RWPE1 (cell line): ENCODE measurements at regions of chr4 and their contacts with region 1.

Region 1: GRCh38 chr4:94621491-94622080 is 136.2 kb upstream of the BMPR1B start:
- DNase-seq: peak; percentile 49
- H3K27ac ChIP-seq: no peak overlapping the region
- CTCF ChIP-seq: peak; percentile 86

Region 2: GRCh38 chr4:95124906-95125504 is 503.4 kb after region 1 on chr4:
- CTCF ChIA-PET with region 1: interaction called, 13 read pairs
- POLR2A ChIA-PET with region 1: no interaction called
- DNase-seq: peak; percentile 61
- H3K27ac ChIP-seq: no peak overlapping the region
- CTCF ChIP-seq: peak; percentile 74

Region 3: GRCh38 chr4:95549246-95550114 is 927.9 kb after region 1 on chr4:
- CTCF ChIA-PET with region 1: no interaction called
- POLR2A ChIA-PET with region 1: no interaction called
- DNase-seq: no peak
- H3K27ac ChIP-seq: no peak overlapping the region
- CTCF ChIP-seq: no peak